Gastrocnemius medialis (tissue), 4 donors: ENCODE measurements at regions of chr7 and their contacts with region 1.

Region 1: DNA sequence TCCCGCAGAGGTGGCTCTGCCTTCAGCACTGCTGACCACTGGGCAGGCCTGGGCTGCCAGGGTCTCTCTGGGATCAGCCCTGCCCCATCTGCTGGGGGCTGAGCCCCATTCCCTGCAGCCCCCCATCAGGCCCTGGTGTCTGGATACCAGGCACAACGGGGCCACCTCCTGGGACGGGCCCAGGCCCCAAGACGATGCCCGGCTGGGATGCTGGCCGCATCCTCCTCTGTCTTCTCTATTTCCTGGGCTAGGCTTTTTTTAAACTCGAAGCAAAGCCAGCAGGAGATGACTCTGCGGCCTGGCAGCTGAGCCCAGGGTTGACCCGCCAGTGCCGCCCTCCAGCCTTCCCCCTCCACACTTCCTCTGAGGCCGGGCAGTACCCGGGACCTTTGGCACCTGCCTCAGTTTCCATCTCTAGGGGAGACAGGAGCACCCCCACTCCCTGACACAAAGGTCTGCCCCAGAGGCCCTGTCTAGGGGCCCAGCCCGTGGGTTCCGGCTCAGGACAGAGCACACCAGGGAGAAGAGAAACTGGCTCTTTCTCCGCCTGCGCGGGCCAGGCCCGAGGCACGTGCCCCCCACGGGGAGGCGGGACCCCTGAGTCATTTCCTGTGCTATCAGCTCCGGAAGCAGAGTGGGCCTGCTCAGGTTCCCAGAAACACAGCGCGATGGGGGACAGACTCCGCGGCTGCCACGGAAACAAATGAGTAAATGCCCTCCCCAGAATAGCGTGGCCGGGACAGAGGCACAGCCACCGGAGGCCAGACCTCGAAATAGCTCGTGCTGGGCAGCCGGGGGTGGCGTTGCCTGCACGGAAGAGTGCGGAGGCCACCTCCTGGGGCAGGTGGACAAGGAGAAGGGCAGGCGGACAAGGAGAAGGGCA is 84.6 kb upstream of the PDGFA start:
- DNase-seq: peak; percentile 68 to 83
- ATAC-seq: peak; percentile 88 to 89
- H3K4me3 ChIP-seq: peak overlapping the region; percentile 30 to 49 (median 38)
- H3K27ac ChIP-seq: peak overlapping the region; percentile 89 to 94 (median 90)
- H3K4me1 ChIP-seq: peaks cover 21% of the 10 kb centered on the region in 2 donors
- H3K27me3 ChIP-seq: no peaks in the 10 kb centered on the region
- CTCF ChIP-seq: peak in 1 of 5 experiments; percentile 6
- POLR2A ChIP-seq: peak; percentile 66 to 70

Region 2: GRCh38 chr7:80259-81067 is 523.8 kb before region 1 on chr7:
- in situ Hi-C with region 1: no loop called
- intact Hi-C with region 1: no loop called
- DNase-seq: no peak
- ATAC-seq: no peak
- H3K4me3 ChIP-seq: no peak overlapping the region
- H3K27ac ChIP-seq: no peak overlapping the region
- H3K4me1 ChIP-seq: no peaks in the 10 kb centered on the region
- H3K27me3 ChIP-seq: no peaks in the 10 kb centered on the region
- CTCF ChIP-seq: no peak
- POLR2A ChIP-seq: no peak

Region 3: DNA sequence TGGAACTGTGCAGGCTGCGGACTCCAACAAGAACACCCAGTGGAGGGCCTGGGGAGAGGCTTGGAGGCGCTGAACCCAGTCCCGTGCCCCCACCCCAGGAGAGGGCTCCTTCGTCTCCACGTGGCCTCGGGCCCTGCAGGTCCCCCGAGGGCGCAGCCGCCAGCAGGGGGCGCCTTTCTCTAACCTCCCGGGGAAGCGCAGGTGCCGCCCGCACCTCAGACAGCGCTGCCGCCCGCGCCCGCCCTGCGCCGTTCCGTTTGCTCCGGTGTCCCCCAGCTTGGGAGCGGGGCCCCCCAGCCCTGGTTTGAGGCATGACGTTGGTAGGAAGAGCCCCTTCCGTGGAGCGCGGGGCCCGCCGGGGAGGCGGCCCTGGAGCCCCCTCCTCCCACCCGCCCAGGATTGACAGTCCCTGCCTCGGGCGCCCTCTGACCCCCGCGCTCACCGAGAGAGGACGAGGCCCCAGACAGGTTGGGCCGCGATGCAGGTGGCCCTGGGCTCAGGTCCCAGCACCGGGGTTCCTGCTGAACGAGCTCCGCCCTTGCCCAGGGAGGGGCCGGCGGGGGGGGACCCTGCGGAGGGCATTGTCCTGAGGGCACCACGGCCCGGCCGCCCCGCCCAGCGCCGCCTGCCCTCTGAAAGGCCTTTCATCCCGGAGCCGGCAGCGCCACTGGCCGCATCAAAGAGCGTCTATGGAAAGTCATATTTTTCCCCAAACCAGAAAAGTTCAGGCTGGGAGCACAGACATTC is 271.4 kb before region 1 on chr7:
- in situ Hi-C with region 1: no loop called
- intact Hi-C with region 1: loop called (anchors 1 kb)
- DNase-seq: peak; percentile 25 to 59
- ATAC-seq: peak; percentile 89 to 94
- H3K4me3 ChIP-seq: peak overlapping the region; percentile 48 to 74 (median 54)
- H3K27ac ChIP-seq: peak overlapping the region in 1 of 4 donors; percentile 38
- H3K4me1 ChIP-seq: peaks cover 5 to 9% of the 10 kb centered on the region in 2 donors
- H3K27me3 ChIP-seq: no peaks in the 10 kb centered on the region
- CTCF ChIP-seq: peak; percentile 71 to 96 (median 91)
- POLR2A ChIP-seq: no peak

Region 4: GRCh38 chr7:379456-380138 is 224.6 kb before region 1 on chr7:
- in situ Hi-C with region 1: no loop called
- intact Hi-C with region 1: loop called (anchors 1 kb)
- DNase-seq: no peak
- ATAC-seq: peak in 1 of 2 donors; percentile 30
- H3K4me3 ChIP-seq: peak overlapping the region; percentile 48 to 54 (median 50)
- H3K27ac ChIP-seq: no peak overlapping the region
- H3K4me1 ChIP-seq: peaks cover 7 to 13% of the 10 kb centered on the region in 2 donors
- H3K27me3 ChIP-seq: peaks cover 0 to 32% (median 3%) of the 10 kb centered on the region in 3 donors
- CTCF ChIP-seq: no peak
- POLR2A ChIP-seq: no peak

Region 5: DNA sequence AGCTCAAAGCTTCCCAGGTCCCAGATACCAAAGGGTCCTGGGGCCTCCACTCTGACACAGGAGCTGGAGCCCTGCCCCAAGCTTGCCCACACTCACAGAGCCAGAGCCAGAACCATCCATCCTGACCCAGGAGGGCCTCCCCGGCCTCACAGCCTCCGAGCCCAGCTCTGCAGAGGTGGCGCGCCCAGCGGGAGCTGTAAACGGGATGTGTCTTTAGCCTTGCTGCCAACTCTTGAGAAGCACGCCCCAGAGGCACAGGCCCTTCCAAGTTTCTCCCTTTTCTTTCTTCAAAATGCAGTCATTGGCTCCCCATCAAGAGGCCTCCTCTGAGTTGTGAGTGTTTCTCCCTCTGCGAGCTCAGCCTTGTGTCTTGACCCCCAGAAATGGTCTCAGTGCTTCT is 159.6 kb before region 1 on chr7:
- in situ Hi-C with region 1: no loop called
- intact Hi-C with region 1: loop called (anchors 5 kb)
- DNase-seq: no peak
- ATAC-seq: no peak
- H3K4me3 ChIP-seq: no peak overlapping the region
- H3K27ac ChIP-seq: no peak overlapping the region
- H3K4me1 ChIP-seq: peaks cover 11 to 14% of the 10 kb centered on the region in 2 donors
- H3K27me3 ChIP-seq: no peaks in the 10 kb centered on the region
- CTCF ChIP-seq: no peak
- POLR2A ChIP-seq: no peak

Region 6: DNA sequence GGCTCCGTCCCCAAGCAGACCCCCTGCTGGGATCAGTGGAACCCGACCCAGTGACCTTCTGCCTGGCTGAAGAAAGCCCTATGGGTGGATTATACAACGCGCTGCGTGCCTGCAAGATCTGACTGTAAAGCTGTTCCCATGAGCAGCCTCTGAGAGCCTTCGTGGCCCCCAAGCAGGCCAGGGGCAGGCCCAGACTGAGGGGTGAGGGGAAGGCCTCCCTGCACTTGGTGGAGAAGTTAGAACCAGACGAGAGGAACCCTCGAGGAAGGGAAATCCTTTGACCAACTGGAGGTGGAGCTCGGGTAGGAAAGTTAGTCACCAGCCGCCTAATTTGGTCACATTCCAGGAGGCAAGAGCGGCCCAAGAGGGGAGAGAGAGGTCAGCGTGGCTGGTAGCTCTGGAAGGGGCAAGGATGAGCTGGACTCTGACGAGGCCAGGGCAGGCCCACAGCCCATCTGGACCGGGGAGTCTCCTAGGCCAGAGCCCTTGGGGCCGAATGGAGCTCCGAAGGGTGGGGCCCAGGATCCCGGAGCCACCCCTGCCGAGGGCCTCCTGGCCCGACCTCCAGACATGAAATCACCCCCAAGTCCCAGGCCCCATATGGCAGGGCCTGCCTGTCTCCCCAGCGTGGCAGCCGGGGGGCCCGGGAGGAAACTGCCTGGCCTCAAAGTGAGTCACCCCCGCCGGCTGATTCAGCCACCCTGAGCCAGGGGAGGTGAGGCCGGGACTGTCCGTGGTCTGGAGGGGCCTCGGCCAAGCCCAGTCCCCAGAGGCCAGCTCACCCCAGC is 61.3 kb before region 1 on chr7:
- in situ Hi-C with region 1: no loop called
- intact Hi-C with region 1: no loop called
- DNase-seq: no peak
- ATAC-seq: no peak
- H3K4me3 ChIP-seq: no peak overlapping the region
- H3K27ac ChIP-seq: no peak overlapping the region
- H3K4me1 ChIP-seq: no peaks in the 10 kb centered on the region
- H3K27me3 ChIP-seq: no peaks in the 10 kb centered on the region
- CTCF ChIP-seq: no peak
- POLR2A ChIP-seq: no peak

Region 7: GRCh38 chr7:571718-572415 is 32.4 kb before region 1 on chr7:
- in situ Hi-C with region 1: no loop called
- intact Hi-C with region 1: loop called (anchors 2 kb)
- DNase-seq: no peak
- ATAC-seq: peak; percentile 28 to 50
- H3K4me3 ChIP-seq: peak overlapping the region; percentile 4 to 21 (median 4)
- H3K27ac ChIP-seq: peak overlapping the region in 1 of 4 donors; percentile 24
- H3K4me1 ChIP-seq: peaks cover 16 to 26% of the 10 kb centered on the region in 2 donors
- H3K27me3 ChIP-seq: peaks cover 39 to 53% (median 45%) of the 10 kb centered on the region in 3 donors
- CTCF ChIP-seq: no peak
- POLR2A ChIP-seq: no peak

Region 8: DNA sequence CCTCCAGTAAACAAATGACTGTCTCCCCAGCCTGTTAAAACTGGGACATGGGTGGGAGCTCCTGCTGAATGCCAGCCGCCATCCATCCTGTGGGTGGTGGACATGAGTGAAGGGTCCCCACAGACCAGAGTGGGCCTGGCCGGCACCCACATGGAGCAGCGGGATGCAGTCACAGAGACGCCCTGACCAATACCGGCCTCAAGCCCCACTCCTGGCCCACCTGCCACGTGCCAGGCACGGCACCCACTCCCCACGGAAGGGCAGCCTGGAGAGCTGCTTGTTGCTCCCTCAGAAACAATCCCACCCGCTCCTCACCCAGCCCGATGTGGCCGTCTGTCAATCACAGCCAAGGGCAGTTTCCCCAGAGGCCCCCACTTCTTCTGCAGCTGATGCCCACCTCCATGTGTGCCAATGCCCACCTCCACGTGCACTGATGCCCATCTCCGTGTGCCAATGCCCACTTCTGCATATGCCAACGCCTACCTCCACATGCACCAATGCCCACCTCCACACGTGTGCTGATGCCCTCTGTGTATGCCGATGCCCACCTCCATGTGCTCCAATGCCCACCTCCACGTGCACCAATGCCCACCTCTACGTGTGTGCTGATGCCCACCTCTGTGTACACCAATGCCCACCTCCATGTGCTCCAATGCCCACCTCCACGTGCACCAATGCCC is 79.4 kb after region 1 on chr7:
- in situ Hi-C with region 1: no loop called
- intact Hi-C with region 1: no loop called
- DNase-seq: no peak
- ATAC-seq: no peak
- H3K4me3 ChIP-seq: no peak overlapping the region
- H3K27ac ChIP-seq: no peak overlapping the region
- H3K4me1 ChIP-seq: no peaks in the 10 kb centered on the region
- H3K27me3 ChIP-seq: no peaks in the 10 kb centered on the region
- CTCF ChIP-seq: no peak
- POLR2A ChIP-seq: no peak